ENCODE measurements at regions of chr7 and their contacts with region 1.

Region 1: GRCh38 chr7:105652359-105652993 is 71.2 kb upstream of the EFCAB10 start:
- DNase-seq: peak; percentile 64 to 92 (median 86)

Region 2: GRCh38 chr7:105473163-105473562 is 179.3 kb before region 1 on chr7:
- intact Hi-C with region 1: no loop called
- DNase-seq: no peak

Region 3: DNA sequence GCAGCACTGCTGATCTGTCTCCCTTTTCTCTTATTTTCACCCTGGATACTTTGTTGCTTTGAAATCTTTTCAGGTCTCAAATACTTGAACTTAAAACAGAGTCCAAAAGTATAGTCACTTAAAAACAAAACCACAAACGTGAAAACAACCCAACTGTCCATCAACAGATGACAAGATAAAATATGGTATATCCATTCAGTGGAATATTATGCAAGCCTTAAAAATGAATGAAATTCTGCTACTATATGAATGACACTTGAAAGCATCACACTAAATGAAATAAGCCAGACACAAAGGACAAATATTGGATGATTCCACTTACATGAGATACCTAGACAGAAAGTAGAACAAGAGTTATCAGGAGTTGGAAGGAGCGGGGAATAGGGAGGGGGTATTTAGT is 26.5 kb before region 1 on chr7:
- intact Hi-C with region 1: no loop called
- DNase-seq: no peak

Region 4: GRCh38 chr7:106041140-106041717 is 388.8 kb after region 1 on chr7:
- intact Hi-C with region 1: loop called (anchors 5 kb)
- DNase-seq: peak in 9 of 42 donors; percentile 20 to 59 (median 33)

Measured in head of caudate nucleus (tissue), 42 donors.